ENCODE measurements at regions of chr11 and their contacts with region 1.

Region 1: DNA sequence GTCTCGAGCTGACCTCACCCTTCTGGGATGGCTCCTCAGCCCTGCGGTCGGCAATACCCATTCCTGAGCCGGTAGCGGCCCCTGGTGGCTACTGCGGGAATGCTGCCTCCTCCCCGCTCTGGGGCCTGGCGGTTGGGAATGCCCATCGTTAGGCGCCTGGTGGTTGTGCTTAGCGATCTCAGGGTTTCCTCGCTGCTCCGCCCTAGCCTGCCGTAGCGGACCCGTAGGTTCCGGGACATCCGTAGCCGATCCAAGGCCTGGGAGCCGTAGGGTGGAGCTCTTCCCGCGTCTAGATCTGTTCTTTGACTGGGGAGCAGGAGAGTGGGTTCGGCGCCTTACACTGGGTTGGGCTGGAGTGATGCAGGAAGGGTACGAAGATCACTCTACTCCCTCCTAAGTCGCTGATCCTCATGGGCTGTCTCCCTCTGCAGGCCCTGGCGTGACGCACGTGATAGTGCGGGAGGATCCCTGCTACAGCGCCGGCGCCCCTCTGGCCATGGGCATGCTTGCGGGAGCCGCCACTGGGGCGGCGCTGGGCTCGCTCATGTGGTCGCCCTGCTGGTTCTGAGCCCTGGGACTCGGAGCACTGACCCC is 14.8 kb downstream of the PLEKHB1 start:
- DNase-seq: peak; percentile 69 to 80 (median 75)
- H3K4me3 ChIP-seq: peak overlapping the region in 6 of 7 experiments; percentile 40 to 81 (median 61)
- H3K27ac ChIP-seq: no peak overlapping the region
- H3K4me1 ChIP-seq: peaks cover 2 to 16% (median 14%) of the 10 kb centered on the region in 4 experiments
- H3K27me3 ChIP-seq: peaks cover 0 to 2% (median 0%) of the 10 kb centered on the region in 5 experiments

Region 2: DNA sequence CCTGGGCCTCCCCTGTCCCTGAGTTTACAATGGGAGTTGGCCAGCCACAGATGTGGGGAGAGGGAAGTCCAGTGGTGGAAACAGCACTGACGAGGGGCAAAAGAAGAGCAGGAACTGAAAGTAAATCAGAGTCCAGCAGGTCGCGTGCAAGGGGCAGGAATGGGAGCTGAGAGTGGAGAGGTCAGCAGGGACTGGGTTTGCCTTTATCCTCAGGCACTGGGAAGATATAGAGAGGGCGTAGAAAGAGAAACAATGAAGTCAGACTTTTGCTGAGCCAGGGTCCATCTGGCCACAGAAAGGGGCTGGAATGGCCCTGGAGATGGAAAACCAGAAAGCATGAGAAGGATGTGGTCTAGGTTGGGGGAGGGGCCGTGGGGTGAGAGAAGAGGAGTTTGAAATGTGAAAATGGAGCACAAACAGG is 380.5 kb before region 1 on chr11:
- CTCF ChIA-PET with region 1: no interaction called
- POLR2A ChIA-PET with region 1: no interaction called
- DNase-seq: no peak
- H3K4me3 ChIP-seq: no peak overlapping the region
- H3K27ac ChIP-seq: no peak overlapping the region
- H3K4me1 ChIP-seq: peaks cover 0 to 29% (median 3%) of the 10 kb centered on the region in 4 experiments
- H3K27me3 ChIP-seq: no peaks in the 10 kb centered on the region

Region 3: DNA sequence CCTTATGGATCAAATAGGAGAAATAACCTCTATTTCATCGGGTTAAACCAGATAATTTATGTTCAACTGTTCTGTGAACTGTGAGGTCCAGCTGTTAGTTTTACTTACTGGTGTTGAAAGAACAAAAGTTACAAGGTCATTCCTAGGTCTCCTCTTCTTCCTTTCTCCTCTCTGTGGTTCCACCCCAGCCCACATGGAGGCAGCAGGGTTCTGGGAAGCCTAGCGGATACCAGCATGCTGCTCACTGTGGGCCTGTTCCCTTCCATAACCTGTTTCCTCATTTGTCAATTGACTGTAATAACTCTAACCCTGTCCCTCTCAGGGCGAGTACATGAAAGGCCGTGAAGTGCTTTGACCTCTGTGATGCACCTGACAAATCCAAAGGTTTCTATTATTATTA is 257.1 kb before region 1 on chr11:
- CTCF ChIA-PET with region 1: interaction called, 196 read pairs
- POLR2A ChIA-PET with region 1: interaction called, 8 read pairs
- DNase-seq: peak; percentile 58 to 80 (median 77)
- H3K4me3 ChIP-seq: no peak overlapping the region
- H3K27ac ChIP-seq: no peak overlapping the region
- H3K4me1 ChIP-seq: peaks cover 0 to 5% (median 1%) of the 10 kb centered on the region in 4 experiments
- H3K27me3 ChIP-seq: no peaks in the 10 kb centered on the region

Region 4: DNA sequence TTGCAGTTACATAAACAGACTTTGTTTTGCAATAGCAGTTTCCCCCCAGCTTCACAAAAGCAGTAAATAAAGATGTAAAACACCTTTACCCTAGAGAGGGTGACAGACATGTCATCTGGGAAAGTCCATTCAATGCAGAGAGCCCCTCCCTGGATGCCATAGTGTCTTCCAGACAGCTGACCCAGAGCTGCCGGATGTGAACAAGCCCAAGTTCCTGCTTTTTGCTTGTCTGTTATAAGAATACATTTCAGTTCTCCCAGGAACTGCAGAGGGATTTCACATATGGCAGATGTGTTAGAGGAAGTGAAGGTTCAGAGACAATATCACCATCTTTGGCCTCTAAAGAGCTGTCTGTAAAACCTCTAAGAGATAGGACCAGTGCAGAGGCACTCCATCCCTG is 236.0 kb before region 1 on chr11:
- CTCF ChIA-PET with region 1: interaction called, 10 read pairs
- POLR2A ChIA-PET with region 1: no interaction called
- DNase-seq: no peak
- H3K4me3 ChIP-seq: no peak overlapping the region
- H3K27ac ChIP-seq: no peak overlapping the region
- H3K4me1 ChIP-seq: peaks cover 0 to 10% (median 2%) of the 10 kb centered on the region in 4 experiments
- H3K27me3 ChIP-seq: no peaks in the 10 kb centered on the region

Region 5: DNA sequence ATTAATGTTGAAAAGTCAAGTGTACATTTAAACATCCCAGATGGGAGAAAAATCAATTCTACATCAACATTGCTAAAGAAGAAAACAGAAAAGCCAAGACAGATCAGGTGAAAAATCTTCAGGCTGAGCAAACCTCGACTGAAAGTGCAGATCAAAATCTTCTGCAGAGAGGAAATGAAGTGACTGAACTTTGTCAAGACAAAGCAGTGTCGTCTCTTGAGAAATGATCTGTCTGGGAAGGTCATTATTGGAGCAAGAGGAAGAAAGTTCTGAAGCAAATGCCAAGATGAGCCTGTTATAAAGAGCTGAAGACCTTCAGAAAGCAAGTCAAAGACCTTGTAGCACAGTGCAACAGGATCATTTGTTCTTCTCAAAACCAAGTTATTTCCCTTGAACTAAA is 20.5 kb before region 1 on chr11:
- CTCF ChIA-PET with region 1: interaction called, 48 read pairs
- POLR2A ChIA-PET with region 1: no interaction called
- DNase-seq: no peak
- H3K4me3 ChIP-seq: no peak overlapping the region
- H3K27ac ChIP-seq: no peak overlapping the region
- H3K4me1 ChIP-seq: peaks cover 0 to 6% (median 2%) of the 10 kb centered on the region in 4 experiments
- H3K27me3 ChIP-seq: peaks cover 0 to 1% (median 0%) of the 10 kb centered on the region in 5 experiments

Region 6: GRCh38 chr11:73671701-73672100 is 10.6 kb after region 1 on chr11:
- CTCF ChIA-PET with region 1: interaction called, 12 read pairs
- POLR2A ChIA-PET with region 1: no interaction called
- DNase-seq: no peak
- H3K4me3 ChIP-seq: no peak overlapping the region
- H3K27ac ChIP-seq: no peak overlapping the region
- H3K4me1 ChIP-seq: no peaks in the 10 kb centered on the region
- H3K27me3 ChIP-seq: no peaks in the 10 kb centered on the region